Caki2 (cell line): ENCODE measurements at regions of chr17 and their contacts with region 1.

Region 1: DNA sequence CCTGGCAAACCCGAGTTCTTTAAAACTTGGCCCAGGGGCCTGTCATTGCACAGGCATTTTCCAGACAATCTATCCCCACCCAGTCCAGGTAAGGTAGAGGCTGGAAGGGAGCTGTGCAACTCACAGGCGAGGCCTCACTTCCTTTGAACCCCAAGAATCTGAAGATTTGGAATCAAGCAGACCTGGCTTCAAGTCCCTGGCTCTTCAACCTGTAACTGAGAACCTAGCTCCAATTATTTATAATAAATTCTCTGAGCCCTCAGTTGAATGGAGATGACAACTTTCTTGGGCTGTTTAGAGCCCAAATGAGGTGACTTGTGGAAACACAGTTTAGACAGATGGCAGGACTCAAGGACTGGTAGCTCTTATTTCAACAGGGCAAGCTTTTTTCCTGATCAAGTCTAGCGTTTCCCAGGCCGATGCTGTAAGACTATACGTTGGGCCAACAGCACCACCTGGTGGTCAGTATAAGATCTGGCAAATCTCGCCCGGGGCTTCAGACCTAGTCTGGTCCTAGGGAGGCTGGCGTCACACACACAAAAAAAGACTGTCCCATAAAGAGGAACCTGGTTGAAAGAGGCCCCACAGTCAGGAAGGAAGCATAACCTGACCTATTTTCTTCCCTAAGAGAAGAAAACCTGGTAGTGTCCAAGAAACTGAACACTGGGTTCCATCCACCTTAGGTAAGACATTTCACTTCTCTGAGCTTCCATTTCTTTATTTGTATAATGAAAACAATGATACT is 117.9 kb downstream of the C17orf67 start:
- DNase-seq: peak; percentile 58

Region 2: DNA sequence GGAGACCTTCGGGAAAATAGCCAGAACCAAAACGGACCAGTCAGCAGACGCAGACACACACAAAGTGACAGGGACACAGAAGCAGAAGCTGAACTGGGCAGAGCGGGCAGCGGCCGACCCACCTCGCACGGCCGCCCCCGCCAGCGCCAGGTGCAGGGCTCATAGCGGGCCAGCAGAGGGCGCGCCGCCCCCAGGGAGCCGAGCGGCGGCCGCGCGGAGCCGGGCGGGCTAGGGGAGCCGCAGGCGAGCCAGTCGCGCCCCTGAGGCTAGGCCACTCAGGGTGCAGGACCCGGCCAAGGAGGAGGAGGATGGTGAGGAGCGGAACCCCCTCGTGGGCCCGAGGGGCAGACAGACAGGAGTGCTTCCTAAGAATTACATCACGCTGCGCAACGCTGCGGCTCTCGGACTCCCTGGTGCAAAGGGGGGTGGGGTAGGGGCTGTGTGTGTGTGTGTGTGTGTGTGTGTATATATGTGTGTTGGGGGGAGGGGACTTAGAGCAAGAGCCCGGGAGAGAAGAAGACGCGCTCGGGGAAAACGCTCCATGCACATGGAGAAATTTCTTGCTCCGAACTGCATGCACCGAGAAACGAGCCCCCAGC is 123.2 kb before region 1 on chr17:
- in situ Hi-C with region 1: loop called (anchors 25 kb)
- DNase-seq: peak; percentile 71